PC-9 (cell line): ENCODE measurements at regions of chr5 and their contacts with region 1.

Region 1: GRCh38 chr5:14650052-14650451 is 14.5 kb upstream of the OTULIN start:
- DNase-seq: no peak
- H3K4me3 ChIP-seq: no peak overlapping the region
- H3K27ac ChIP-seq: no peak overlapping the region
- H3K4me1 ChIP-seq: no peaks in the 10 kb centered on the region
- H3K27me3 ChIP-seq: 0 out of 2 replicates have a peak, but pooled peaks cover 14% of the 10 kb centered on the region
- CTCF ChIP-seq: no peak

Region 2: GRCh38 chr5:13359326-13359725 is 1290.7 kb before region 1 on chr5:
- CTCF ChIA-PET with region 1: no interaction called
- POLR2A ChIA-PET with region 1: interaction called, 14 read pairs
- intact Hi-C with region 1: no loop called
- DNase-seq: no peak
- H3K4me3 ChIP-seq: no peak overlapping the region
- H3K27ac ChIP-seq: no peak overlapping the region
- H3K4me1 ChIP-seq: peaks cover 10% of the 10 kb centered on the region
- H3K27me3 ChIP-seq: no peaks in the 10 kb centered on the region
- CTCF ChIP-seq: no peak

Region 3: DNA sequence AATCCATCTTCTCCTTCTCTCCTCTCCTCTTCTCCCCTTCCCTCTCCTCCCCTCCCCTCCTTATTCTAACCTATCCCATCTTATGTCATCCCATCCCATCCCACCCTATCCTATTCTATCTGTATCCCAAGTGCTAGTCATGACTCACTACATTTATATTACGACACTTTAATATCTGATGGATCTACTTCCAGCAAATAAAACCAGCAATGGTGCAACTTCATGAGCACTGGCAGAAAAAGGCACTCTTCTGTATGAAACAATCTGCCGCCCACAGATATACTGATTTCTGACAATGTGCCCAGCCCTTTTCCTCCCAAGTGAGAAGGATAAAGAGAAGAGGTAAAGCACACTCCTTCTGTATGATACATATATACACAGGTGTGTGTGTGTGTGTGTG is 308.1 kb after region 1 on chr5:
- CTCF ChIA-PET with region 1: no interaction called
- POLR2A ChIA-PET with region 1: no interaction called
- intact Hi-C with region 1: no loop called
- DNase-seq: no peak
- H3K4me3 ChIP-seq: no peak overlapping the region
- H3K27ac ChIP-seq: no peak overlapping the region
- H3K4me1 ChIP-seq: peaks cover 8% of the 10 kb centered on the region; the same call in 1 of the 2 replicates
- H3K27me3 ChIP-seq: peaks cover 4% of the 10 kb centered on the region
- CTCF ChIP-seq: no peak